ENCODE measurements at regions of chr9 and their contacts with region 1.

Region 1: DNA sequence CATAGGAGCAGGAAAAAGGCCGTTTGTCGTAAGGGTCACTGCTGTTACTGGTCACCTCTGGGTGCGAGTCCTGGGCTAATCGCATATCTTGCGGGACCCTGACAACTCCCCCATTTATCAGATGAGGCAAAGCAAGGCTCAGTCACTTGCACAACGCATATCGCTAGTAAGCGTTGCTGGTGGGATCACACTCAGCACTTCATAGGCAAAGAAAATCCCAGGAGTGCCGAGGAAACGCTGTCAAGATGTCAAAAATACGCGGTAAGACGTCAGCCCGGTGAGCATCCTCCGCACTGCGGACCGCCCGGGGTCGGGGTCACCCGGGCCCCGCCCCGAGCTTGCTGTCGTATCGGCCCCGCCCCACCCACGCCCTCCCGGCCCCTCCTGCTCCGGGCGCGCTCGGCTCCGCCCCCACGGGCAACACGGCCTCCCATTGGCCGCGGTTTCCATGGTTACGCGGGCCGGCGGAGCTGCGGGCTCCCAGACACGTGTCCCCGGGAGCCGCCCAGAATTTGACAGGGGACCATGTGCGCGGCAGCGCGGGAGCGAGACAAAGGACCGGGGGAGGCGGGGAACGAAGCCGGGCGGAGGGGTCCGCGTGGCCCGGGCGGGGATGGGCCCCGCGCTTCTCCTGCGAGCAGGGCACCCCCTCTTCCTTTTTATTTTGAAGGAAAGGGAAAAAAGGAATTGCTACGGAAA is 80.2 kb upstream of the IER5L start:
- DNase-seq: peak; percentile 71 to 93
- H3K4me3 ChIP-seq: peak overlapping the region; percentile 20 to 53
- H3K27ac ChIP-seq: peak overlapping the region in 1 of 2 donors; percentile 20
- H3K4me1 ChIP-seq: peaks cover 14 to 18% of the 10 kb centered on the region in 2 donors
- H3K27me3 ChIP-seq: no peaks in the 10 kb centered on the region
- CTCF ChIP-seq: no peak

Region 2: GRCh38 chr9:129320575-129321263 is 62.4 kb after region 1 on chr9:
- intact Hi-C with region 1: loop called (anchors 5 kb)
- DNase-seq: peak in 1 of 2 donors; percentile 88
- H3K4me3 ChIP-seq: peak overlapping the region; percentile 54 to 60
- H3K27ac ChIP-seq: peak overlapping the region; percentile 92 to 94
- H3K4me1 ChIP-seq: peaks cover 30 to 66% of the 10 kb centered on the region in 2 donors
- H3K27me3 ChIP-seq: no peaks in the 10 kb centered on the region
- CTCF ChIP-seq: peak in 2 of 3 experiments; percentile 2 to 17